ENCODE measurements at regions of chr18 and their contacts with region 1.

Region 1: GRCh38 chr18:2237706-2238105 is 333.6 kb downstream of the METTL4 start:
- DNase-seq: no peak
- H3K4me3 ChIP-seq: no peak overlapping the region
- CTCF ChIP-seq: no peak

Region 2: DNA sequence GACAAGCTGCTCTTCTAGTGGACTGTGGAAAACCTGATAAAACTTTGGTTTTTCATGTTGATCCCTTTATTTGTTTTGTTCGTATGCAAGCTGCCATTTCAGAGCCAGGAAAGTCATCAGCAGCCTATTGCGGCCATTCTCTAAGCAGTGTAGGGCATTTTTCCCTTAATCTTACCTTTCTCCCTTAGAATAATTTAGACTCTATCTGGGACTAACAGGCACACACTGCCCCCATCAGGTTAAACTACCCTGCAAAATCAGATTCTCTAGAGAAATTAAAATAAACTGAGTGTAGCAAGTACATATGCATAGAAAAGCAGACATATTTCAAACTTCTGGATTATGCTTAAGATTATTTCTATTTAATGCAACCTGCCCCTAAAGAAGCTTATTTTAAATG is 13.9 kb before region 1 on chr18:
- CTCF ChIA-PET with region 1: interaction called, 10 read pairs
- POLR2A ChIA-PET with region 1: no interaction called
- DNase-seq: no peak
- H3K4me3 ChIP-seq: no peak overlapping the region
- CTCF ChIP-seq: peak; percentile 26